ENCODE measurements at regions of chr11 and their contacts with region 1.

Region 1: DNA sequence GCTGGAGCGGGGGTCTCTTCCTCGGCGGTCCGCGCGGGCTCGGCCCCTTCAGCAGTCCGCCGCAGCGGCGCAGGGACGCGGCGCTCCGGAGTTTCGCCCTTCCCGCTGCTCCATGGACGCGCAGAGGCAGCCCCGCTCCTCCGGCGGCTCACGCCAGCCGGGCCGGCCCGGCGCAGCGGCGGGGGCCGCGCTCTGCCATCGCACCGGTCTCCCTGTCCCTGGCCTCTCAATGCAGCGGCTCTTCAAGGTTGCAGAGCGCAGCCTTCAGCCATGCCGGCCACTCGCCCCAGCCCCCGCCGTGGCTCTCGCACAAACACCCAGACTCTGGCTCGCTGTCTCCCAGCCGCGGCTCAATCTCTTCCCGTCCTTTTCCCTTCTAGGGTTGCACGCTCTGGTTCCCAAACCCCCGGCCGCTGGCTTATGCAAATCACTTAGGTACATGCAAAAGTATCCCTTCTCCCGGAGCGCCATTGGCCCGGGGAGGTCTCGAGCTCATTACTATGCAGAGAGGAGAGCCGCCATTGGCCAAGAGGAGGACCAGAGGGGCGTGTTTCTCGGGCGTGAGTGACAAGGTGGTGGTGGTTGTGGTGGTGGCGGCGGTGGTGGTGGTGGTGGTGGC is at the start of gene LGR4:
- DNase-seq: peak; percentile 95
- ATAC-seq: peak; percentile 98
- total RNA-seq, gene LGR4: 32.7 TPM

Region 2: DNA sequence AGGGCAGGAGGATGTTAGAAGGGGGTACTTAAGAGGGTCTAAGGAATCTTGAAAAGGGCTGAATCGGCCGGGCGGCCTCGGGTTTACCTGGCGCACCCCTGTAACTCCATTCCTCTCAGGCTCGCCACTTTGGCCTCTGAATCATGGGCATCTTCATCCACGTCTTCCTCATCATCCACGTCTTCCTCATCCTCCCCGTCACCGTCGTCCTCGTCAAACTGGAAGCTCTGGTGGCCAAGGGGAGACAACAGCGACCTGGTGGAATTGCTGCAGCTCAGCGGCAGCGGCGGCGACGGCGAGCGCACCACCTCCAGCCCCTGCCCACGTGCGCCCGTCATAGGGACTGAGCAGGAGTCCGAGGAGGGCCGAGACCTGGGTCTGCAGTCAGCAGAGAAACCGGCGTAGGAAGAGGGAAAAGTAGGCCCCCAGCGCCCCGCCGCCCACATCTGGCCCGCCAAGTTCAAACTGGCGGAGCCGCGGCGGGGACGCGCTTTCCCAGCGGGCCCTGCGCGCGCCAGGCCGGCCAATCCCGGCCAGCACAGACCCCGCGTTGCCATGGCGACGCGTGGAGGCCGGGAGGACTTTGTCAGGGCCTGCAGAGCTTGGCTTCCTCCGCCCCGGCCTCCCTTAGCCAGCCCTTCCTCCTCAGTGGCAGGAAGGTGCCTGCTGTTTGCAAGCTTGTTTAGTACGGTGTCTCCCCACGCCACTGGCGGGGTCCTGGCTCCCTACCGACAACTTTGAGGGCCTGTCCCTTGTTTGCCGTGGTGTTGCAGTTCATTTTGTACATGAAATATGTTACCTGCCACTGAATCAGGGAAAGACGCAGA is 109.5 kb before region 1 on chr11 and contains the start of gene CCDC34:
- intact Hi-C with region 1: loop called (anchors 5 kb)
- DNase-seq: peak; percentile 96
- ATAC-seq: peak; percentile 98
- total RNA-seq, gene CCDC34: 3.8 TPM

Region 3: DNA sequence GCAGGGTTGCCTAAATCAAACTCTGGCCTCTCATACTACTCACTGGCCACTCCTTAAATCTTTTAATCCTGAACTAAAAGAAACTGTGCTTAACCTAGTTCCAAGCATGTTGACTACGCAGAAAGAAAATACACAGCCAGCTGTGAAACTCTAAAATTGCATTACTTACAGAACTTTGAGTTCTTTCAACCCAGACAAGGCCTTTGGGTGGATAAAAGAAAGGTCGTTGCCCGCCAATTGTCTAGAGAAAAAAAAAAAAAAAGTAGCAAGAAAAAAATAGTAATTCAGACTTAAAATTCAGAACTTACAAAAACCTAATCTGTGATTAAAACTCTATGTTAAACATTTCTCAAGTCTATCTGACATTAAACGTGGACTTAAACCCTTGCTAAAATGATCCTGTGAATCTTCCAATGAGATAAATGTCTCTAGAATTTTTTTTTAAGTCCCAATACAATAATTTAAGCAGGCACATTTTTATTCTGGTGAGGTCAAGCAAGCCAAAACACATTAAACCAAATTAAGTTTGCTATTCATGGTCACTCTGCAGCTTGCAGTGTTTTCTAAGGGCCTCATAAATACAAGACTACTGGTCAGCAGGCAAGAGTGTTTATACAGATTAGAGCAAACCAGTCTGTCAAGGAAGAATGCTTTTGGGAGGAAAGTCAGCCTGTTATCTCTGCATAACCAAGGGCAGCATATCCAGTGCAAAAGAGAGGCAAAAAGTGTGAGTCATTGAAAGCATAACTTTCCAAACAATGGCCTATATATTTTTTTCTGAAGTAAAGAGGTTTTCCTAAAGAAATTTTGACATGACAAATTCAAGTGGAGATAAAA is 80.0 kb before region 1 on chr11:
- intact Hi-C with region 1: loop called (anchors 5 kb)
- DNase-seq: no peak
- ATAC-seq: peak; percentile 38

Region 4: GRCh38 chr11:27423125-27423524 is 49.4 kb before region 1 on chr11:
- intact Hi-C with region 1: loop called (anchors 5 kb)
- DNase-seq: peak; percentile 66
- ATAC-seq: peak; percentile 92

Region 5: GRCh38 chr11:27524155-27524554 is 51.6 kb after region 1 on chr11:
- intact Hi-C with region 1: loop called (anchors 10 kb)
- DNase-seq: no peak
- ATAC-seq: no peak

Region 6: DNA sequence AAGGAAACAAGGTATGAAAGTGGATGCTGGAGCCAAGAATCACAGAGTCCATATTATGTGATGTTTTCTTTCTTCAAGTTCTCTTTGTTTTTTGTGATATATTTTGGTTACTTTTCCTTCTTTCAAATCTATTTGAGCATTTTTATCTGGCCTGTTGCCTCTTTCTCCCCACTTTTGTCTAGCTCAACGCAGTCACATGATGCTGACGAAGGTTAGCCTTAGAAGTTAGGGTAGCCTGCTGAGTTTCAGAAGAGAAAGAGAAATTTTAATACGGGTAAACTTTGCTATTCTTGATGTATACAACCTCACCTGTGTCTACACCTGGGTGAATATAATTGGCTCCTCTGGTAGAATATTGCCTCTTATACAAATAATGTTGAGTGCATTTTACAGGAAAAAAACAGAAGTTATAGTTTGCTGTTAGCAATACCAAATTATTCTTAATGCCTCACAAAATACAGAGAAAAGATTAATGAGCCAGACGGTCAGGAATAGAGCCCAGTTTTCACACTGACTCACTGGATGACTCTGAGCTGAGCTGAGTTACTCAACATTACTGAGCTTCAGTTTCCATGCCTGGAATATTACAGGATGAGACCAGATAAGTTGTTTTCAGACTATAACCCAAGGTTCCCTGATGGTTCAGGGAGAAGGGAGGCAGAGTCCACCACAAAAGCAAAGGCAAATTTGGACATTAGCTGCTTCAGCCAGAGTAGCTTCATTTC is 389.4 kb after region 1 on chr11:
- intact Hi-C with region 1: no loop called
- DNase-seq: no peak
- ATAC-seq: peak; percentile 69